ENCODE measurements at regions of chr10 and their contacts with region 1.

Region 1: DNA sequence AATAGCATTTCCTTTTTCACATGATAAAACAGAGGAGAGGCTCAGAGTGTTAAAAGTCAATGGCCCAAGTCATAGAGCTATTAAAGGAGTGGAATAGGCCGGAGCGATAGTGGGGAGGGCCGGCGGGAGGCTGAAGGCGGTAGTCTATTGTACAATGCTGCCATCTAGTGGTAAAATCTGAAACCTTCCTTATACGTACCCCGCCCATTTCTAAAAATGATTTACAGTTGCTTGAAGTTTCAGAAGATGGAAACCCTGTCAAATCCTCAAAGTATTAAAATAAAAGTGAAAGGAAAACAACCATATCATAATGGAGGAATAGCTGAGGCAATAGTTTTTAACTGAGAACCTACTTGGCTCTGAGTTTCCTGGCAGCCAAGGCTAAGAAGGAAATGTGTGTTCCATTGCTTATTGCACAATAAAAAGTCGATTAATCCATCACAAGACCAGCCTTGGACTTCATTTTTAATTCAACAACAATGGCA is 209.1 kb downstream of the CCSER2 start:
- DNase-seq: peak; percentile 34 to 76 (median 62)
- H3K4me3 ChIP-seq: no peak overlapping the region
- H3K27ac ChIP-seq: no peak overlapping the region
- H3K4me1 ChIP-seq: peaks cover 5 to 6% of the 10 kb centered on the region in 2 donors
- H3K27me3 ChIP-seq: peaks cover 13% of the 10 kb centered on the region
- CTCF ChIP-seq: peak; percentile 81 to 91 (median 88)
- POLR2A ChIP-seq: no peak

Region 2: GRCh38 chr10:84004201-84004600 is 533.3 kb before region 1 on chr10:
- intact Hi-C with region 1: no loop called
- DNase-seq: no peak
- H3K4me3 ChIP-seq: no peak overlapping the region
- H3K27ac ChIP-seq: no peak overlapping the region
- H3K4me1 ChIP-seq: no peaks in the 10 kb centered on the region
- H3K27me3 ChIP-seq: no peaks in the 10 kb centered on the region
- CTCF ChIP-seq: no peak
- POLR2A ChIP-seq: no peak

Region 3: GRCh38 chr10:84264611-84265141 is 272.8 kb before region 1 on chr10:
- intact Hi-C with region 1: loop called (anchors 2 to 5 kb)
- DNase-seq: peak; percentile 48 to 90 (median 74)
- H3K4me3 ChIP-seq: no peak overlapping the region
- H3K27ac ChIP-seq: no peak overlapping the region
- H3K4me1 ChIP-seq: no peaks in the 10 kb centered on the region
- H3K27me3 ChIP-seq: no peaks in the 10 kb centered on the region
- CTCF ChIP-seq: peak; percentile 77 to 94 (median 92)
- POLR2A ChIP-seq: no peak

Region 4: GRCh38 chr10:84296091-84296981 is 241.2 kb before region 1 on chr10:
- intact Hi-C with region 1: no loop called
- DNase-seq: no peak
- H3K4me3 ChIP-seq: no peak overlapping the region
- H3K27ac ChIP-seq: no peak overlapping the region
- H3K4me1 ChIP-seq: no peaks in the 10 kb centered on the region
- H3K27me3 ChIP-seq: no peaks in the 10 kb centered on the region
- CTCF ChIP-seq: no peak
- POLR2A ChIP-seq: no peak

Region 5: DNA sequence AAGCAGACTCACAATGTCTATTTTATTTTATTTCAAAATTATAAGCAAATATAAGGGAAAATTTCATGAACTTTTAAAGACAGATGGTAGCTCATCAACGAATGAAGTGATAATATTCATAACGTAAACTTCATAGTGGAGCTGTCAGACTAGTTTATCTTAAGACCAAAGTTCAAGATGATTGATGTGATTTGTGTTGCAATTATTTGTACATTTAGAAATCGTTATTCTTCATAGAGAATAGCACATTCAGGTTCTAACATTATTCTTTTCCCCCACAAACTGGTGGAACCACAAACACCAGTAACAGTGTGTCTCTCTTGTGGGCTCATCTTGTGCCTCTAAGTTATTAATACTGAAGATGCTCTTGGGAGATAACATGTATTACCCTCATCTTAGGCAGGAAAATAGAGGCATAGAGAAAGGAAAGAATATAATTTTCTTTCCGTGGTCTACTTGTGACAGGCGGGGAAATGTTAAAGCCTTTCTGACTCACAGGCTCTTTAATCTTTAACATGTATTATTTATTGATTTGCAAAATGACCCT is 172.1 kb before region 1 on chr10:
- intact Hi-C with region 1: loop called (anchors 5 to 10 kb)
- DNase-seq: no peak
- H3K4me3 ChIP-seq: no peak overlapping the region
- H3K27ac ChIP-seq: no peak overlapping the region
- H3K4me1 ChIP-seq: peaks cover 0 to 34% of the 10 kb centered on the region in 2 donors
- H3K27me3 ChIP-seq: no peaks in the 10 kb centered on the region
- CTCF ChIP-seq: no peak
- POLR2A ChIP-seq: no peak

Region 6: GRCh38 chr10:84375011-84375410 is 162.5 kb before region 1 on chr10:
- intact Hi-C with region 1: loop called in 1 of 2 experiments (anchors 10 kb)
- DNase-seq: peak in 5 of 7 donors; percentile 26 to 60 (median 42)
- H3K4me3 ChIP-seq: no peak overlapping the region
- H3K27ac ChIP-seq: no peak overlapping the region
- H3K4me1 ChIP-seq: no peaks in the 10 kb centered on the region
- H3K27me3 ChIP-seq: no peaks in the 10 kb centered on the region
- CTCF ChIP-seq: peak; percentile 50 to 74 (median 65)
- POLR2A ChIP-seq: no peak

Measured in adrenal gland (tissue), 19 donors.